ENCODE measurements at regions of chr5 and their contacts with region 1.

Region 1: DNA sequence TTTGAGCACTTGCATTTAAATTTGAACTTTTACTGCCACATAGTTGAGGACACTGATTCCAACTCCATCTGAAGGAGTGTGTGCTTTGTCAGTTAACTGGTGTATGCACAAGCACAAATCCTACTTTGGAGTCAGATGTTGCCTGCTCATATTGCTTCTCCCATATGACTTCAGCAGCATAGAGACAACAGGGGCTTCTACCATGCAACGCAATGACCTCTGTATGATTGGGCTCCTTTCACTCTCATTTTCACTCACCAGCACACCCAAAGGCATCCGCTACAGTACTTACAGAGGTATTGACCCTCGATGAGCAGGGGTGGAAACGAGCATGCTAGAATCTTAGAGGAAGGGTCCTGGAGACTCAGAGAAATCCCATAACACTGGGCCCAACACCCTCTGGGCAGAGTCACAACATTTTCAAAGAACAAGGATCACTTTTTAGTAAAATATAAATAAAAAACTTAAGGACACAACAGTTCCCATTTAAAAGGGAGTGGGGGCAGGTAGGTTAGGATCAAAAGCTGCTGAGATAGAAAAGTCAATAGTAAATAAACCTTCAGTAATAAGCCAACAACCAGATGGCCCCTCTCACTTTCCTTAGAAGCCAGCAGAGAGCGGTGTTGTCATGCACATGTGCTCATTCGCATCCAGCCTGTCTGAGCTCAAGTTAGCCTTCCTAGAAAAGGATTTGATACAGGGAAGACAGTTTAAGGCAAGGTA is 203.8 kb downstream of the SNCAIP start:
- DNase-seq: peak; percentile 80
- H3K4me3 ChIP-seq: no peak overlapping the region
- H3K27ac ChIP-seq: no peak overlapping the region
- H3K4me1 ChIP-seq: no peaks in the 10 kb centered on the region
- H3K27me3 ChIP-seq: peaks cover 0 to 2% of the 10 kb centered on the region in 2 experiments
- CTCF ChIP-seq: peak; percentile 59 to 78
- POLR2A ChIP-seq: no peak

Region 2: DNA sequence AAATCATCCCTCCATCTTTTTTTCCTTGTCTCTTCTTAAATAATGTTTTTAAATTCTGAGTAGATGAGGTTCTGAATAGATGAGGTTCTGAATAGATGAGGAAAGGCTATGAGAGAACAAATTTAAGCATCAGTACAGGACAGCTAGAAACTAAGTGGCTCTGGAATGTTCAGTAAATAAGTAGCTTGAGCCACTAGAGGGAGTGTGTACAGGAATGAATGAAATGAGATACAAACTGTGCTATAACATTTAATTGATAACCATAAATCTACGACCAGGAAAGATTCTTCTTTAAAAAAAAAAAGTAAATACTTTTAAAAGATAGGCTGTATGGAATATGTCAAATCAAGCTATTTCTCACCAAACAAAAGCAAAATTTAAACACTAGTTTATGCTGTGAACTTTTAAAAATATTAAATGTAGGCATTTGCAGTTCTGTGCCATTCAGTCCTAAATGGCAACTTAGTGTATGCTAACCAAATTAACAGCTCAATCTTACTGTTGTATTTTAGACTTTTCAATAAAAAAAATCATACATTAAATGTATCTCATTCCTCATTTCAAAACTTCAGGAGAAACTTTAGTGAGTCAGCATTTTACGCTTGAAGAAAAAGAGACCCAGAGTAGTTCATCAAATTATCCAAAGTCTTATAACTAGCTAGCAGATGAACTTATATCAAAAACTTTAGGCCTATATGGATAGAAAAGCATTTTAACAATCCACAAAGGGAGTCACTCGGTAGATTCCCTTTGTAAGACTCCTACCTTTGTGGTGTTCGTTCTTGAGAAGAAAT is 188.6 kb after region 1 on chr5:
- CTCF ChIA-PET with region 1: interaction called, 10 read pairs
- POLR2A ChIA-PET with region 1: no interaction called
- dilution Hi-C with region 1: no loop called
- intact Hi-C with region 1: loop called (anchors 2 kb)
- DNase-seq: peak; percentile 39
- H3K4me3 ChIP-seq: no peak overlapping the region
- H3K27ac ChIP-seq: no peak overlapping the region
- H3K4me1 ChIP-seq: no peaks in the 10 kb centered on the region
- H3K27me3 ChIP-seq: no peaks in the 10 kb centered on the region
- CTCF ChIP-seq: peak; percentile 38 to 50
- POLR2A ChIP-seq: no peak

Region 3: DNA sequence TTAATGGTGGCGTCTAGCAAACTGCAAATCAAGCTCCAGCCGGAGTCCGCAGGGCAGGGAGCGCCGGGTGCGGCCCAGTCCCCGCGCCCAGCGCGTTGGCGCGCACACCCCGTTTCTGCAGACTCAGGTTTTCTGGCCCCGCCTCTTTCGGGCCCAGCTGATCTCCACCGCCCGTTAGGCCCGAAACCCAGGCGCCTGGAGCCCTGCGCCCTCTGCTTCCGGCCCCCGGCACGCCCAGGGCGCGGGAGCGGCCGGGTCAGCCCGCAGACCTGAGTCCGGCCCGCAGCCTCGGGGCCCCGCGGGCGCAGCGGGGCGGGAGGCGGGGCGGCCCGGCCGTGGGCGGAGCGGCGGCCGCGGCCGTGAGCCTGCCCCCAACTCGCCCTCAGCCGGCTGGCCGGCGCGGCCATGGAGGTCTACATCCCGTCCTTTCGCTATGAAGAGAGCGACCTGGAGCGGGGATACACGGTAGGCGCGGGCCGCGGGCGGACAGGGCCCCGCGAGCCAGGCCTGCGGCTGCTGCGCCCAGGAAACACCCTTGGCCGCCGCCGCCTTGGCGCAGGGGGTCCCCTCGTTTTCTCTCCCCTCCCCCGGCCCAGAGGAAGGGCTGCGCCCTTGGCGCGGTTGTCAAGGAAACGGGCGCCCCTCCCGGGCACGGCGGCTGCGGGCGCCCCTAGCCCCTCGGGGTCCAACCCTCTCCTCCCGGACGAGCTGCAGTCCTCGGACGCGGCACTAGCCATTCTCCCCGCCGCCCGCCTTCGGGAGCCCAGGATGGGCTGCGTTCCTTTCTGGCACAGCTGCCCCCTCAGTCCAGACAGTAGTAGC is 329.6 kb after region 1 on chr5 and contains the start of gene SNX24:
- CTCF ChIA-PET with region 1: interaction called, 3 read pairs
- POLR2A ChIA-PET with region 1: no interaction called
- dilution Hi-C with region 1: no loop called
- intact Hi-C with region 1: loop called (anchors 2 kb)
- DNase-seq: peak; percentile 71
- H3K4me3 ChIP-seq: peak within 1 kb of the TSS; percentile 76 to 95 (median 93)
- H3K27ac ChIP-seq: peak within 1 kb of the TSS; percentile 0
- H3K4me1 ChIP-seq: peaks cover 18% of the 10 kb centered on the region
- H3K27me3 ChIP-seq: no peaks in the 10 kb centered on the region
- CTCF ChIP-seq: no peak
- POLR2A ChIP-seq: peak; percentile 73
- total RNA-seq, gene SNX24: 8.8 and 14.9 TPM in 2 replicates

Region 4: GRCh38 chr5:122999945-123000563 is 484.2 kb after region 1 on chr5:
- CTCF ChIA-PET with region 1: interaction called, 4 read pairs
- POLR2A ChIA-PET with region 1: no interaction called
- dilution Hi-C with region 1: no loop called
- intact Hi-C with region 1: loop called (anchors 1 kb)
- DNase-seq: peak; percentile 23
- H3K4me3 ChIP-seq: no peak overlapping the region
- H3K27ac ChIP-seq: no peak overlapping the region
- H3K4me1 ChIP-seq: no peaks in the 10 kb centered on the region
- H3K27me3 ChIP-seq: no peaks in the 10 kb centered on the region
- CTCF ChIP-seq: peak; percentile 17 to 31
- POLR2A ChIP-seq: no peak

Region 5: GRCh38 chr5:123344816-123345426 is 829.1 kb after region 1 on chr5:
- CTCF ChIA-PET with region 1: interaction called, 80 read pairs
- POLR2A ChIA-PET with region 1: no interaction called
- dilution Hi-C with region 1: no loop called
- intact Hi-C with region 1: loop called (anchors 1 kb)
- DNase-seq: peak; percentile 45
- H3K4me3 ChIP-seq: no peak overlapping the region
- H3K27ac ChIP-seq: no peak overlapping the region
- H3K4me1 ChIP-seq: no peaks in the 10 kb centered on the region
- H3K27me3 ChIP-seq: no peaks in the 10 kb centered on the region
- CTCF ChIP-seq: peak; percentile 34 to 55
- POLR2A ChIP-seq: no peak

Region 6: DNA sequence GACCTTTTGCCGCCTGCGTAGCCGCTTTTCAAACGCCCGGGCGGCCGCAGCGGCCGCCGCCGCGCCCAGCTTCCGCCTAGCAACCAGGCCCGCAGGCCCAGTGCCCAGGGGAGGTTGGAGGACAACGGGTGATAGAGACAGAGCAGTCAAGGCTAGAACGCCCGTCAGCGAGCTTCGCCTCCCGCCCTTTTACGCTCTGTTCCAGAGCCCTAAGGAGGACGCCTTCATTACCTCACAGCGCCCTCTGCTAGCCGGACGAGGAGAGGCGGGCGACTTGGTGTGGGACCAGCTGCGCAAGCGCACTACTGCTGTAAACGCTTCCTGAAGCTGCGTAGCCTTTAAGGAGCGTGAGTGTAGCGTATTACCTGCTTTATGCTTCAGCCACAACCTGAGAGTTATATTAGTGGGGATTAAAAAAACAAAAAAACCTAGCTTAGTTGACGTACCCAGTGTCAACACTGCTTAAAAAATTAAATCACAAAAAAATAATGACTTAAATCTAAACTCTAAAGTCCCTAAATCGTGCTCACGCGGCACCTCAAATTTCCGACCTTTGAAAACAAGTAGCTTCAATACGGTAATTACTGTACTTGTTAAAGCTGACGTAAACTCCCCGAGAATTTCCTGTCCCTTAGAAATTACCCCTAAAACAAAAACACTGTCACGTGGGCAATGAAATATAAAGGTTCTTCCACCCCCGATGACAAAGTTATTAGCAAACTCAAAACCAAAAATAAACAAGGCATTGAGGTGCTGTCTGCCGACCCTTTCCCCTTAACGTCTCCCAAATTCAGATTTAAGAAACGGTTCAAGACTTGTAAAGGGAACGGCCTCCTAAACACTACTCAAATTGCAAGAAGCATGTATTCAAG is 907.6 kb after region 1 on chr5 and contains the start of gene CEP120:
- CTCF ChIA-PET with region 1: interaction called, 11 read pairs
- POLR2A ChIA-PET with region 1: interaction called, 3 read pairs
- dilution Hi-C with region 1: no loop called
- intact Hi-C with region 1: loop called (anchors 1 kb)
- DNase-seq: peak; percentile 100
- H3K4me3 ChIP-seq: peak within 1 kb of the TSS; percentile 81 to 94 (median 93)
- H3K27ac ChIP-seq: peak within 1 kb of the TSS; percentile 62
- H3K4me1 ChIP-seq: peaks cover 11% of the 10 kb centered on the region
- H3K27me3 ChIP-seq: no peaks in the 10 kb centered on the region
- CTCF ChIP-seq: peak; percentile 88
- POLR2A ChIP-seq: peak; percentile 82
- total RNA-seq, gene CEP120: 15.0 and 18.8 TPM in 2 replicates

Region 7: DNA sequence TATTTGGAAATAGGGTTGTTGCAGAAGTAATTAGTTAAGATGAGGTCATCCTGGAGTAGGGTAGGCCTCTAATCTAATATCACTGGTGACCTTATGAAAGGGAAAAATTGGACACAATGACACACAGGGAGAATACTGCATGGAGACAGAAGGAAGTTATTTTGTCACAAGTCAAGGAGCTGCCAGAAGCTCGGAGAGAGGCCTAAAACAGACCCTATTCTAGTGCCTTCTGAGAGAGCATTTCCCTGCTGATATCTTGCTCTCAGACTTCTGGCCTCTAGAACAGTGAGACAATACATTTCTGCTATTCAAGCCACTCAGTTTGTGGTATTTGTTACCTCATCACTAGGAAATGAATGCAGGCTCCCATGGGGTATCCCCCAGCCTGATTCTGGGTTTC is 1329.0 kb after region 1 on chr5:
- CTCF ChIA-PET with region 1: no interaction called
- POLR2A ChIA-PET with region 1: no interaction called
- dilution Hi-C with region 1: no loop called
- intact Hi-C with region 1: no loop called
- DNase-seq: no peak
- H3K4me3 ChIP-seq: no peak overlapping the region
- H3K27ac ChIP-seq: no peak overlapping the region
- H3K4me1 ChIP-seq: no peaks in the 10 kb centered on the region
- H3K27me3 ChIP-seq: no peaks in the 10 kb centered on the region
- CTCF ChIP-seq: no peak
- POLR2A ChIP-seq: no peak